CD8-positive, alpha-beta memory T cell (primary cell): ENCODE measurements at regions of chr3 and their contacts with region 1.

Region 1: GRCh38 chr3:136752422-136753325 is 496 bp upstream of the STAG1 start:
- DNase-seq: peak; percentile 97 to 99 (median 99)
- H3K4me3 ChIP-seq: peak overlapping the region; percentile 60
- H3K4me3 Mint-ChIP-seq: peak overlapping the region; percentile 78 to 99 (median 93)
- H3K27ac ChIP-seq: peak overlapping the region; percentile 86
- H3K27ac Mint-ChIP-seq: peak overlapping the region; percentile 93 to 100 (median 97)
- H3K4me1 ChIP-seq: peaks cover 33% of the 10 kb centered on the region
- H3K4me1 Mint-ChIP-seq: peaks cover 44 to 45% (median 45%) of the 10 kb centered on the region in 3 donors
- H3K27me3 ChIP-seq: no peaks in the 10 kb centered on the region
- H3K27me3 Mint-ChIP-seq: peaks cover 0 to 3% of the 10 kb centered on the region in 2 donors

Region 2: DNA sequence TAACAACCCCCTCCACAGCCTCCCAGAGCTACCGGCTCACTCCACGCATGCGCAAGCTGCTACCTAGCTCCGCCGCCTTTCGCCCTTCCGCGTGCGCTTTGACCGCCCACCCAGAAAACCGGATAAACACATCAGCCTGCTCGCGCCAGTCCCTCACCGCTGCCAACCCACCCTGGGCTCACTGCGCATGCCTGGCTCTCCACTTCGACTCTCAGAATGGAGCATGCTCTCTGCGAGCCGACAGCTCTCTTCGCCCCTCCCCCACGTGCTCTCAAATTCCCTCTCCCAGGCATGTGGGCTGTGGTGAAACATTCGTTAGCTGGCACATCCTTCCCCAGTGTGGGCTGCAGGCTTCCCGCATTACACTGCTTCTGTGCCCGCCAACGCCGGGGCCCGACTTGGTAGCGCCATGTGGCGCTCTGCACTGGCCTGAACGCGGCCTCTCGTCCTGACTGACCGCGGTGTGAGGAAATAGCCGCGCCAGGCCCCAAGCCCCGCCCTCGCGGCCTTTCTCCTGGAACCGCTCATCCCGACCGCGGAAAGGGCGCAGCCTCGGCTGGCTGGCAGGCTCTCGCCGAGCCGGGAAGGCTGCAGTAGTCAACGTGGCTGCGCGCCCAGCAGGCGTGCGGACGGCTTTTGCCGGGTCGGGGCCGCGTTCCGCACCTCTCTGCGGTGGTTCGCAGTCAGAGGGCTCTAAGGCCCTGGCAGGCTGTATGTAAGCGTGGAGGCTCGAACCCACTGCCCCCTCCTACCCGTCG is 556.1 kb before region 1 on chr3:
- CTCF ChIA-PET with region 1: interaction called, 44 read pairs
- POLR2A ChIA-PET with region 1: interaction called, 61 read pairs
- DNase-seq: peak; percentile 96 to 99 (median 97)
- H3K4me3 ChIP-seq: peak overlapping the region; percentile 89
- H3K4me3 Mint-ChIP-seq: peak overlapping the region; percentile 96 to 100 (median 98)
- H3K27ac ChIP-seq: peak overlapping the region; percentile 84
- H3K27ac Mint-ChIP-seq: peak overlapping the region; percentile 98 to 100 (median 99)
- H3K4me1 ChIP-seq: peaks cover 24% of the 10 kb centered on the region
- H3K4me1 Mint-ChIP-seq: peaks cover 32 to 39% (median 39%) of the 10 kb centered on the region in 3 donors
- H3K27me3 ChIP-seq: no peaks in the 10 kb centered on the region
- H3K27me3 Mint-ChIP-seq: peaks cover 0 to 15% of the 10 kb centered on the region in 2 donors

Region 3: DNA sequence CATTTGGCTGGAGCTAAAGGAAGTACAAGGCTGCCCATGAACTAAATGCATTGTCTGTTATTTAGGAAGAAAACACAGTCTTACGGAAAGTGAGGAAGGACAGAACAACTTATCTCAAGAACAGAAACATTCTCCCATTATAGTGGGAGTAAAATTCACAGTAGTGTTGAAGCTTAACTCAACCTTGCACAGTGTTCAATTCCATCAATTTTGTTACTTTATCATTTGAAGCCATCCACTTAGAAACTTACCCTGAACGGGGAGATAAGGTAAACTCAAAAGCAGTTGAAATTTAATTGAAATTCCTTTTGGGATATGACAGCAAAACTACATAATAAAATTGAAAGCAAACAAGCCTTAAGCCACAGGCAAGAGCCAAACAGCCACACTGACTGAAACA is 315.6 kb before region 1 on chr3:
- CTCF ChIA-PET with region 1: interaction called, 10 read pairs
- POLR2A ChIA-PET with region 1: no interaction called
- DNase-seq: no peak
- H3K4me3 ChIP-seq: no peak overlapping the region
- H3K4me3 Mint-ChIP-seq: no peak overlapping the region
- H3K27ac ChIP-seq: no peak overlapping the region
- H3K27ac Mint-ChIP-seq: no peak overlapping the region
- H3K4me1 ChIP-seq: no peaks in the 10 kb centered on the region
- H3K4me1 Mint-ChIP-seq: peaks cover 0 to 5% (median 0%) of the 10 kb centered on the region in 3 donors
- H3K27me3 ChIP-seq: no peaks in the 10 kb centered on the region
- H3K27me3 Mint-ChIP-seq: no peaks in the 10 kb centered on the region

Region 4: DNA sequence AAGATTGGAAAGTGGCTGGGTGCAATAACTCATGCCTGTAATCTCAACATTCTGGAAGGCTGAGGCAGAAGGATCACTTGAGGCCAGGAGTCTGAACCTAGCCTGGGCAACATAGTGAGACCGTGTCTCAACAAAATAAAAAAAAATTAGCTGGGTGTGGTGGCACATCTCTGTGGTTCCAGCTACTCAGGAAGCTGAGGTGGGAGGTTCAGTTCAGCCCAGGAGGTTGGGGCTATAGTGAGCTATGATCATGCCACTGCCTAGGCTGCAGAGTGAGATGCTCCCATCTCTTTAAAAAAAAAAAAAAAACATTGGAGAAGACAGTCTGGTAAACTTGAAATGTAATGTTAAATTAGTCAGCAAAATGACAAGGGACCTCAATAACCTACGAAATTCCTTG is 58.4 kb before region 1 on chr3:
- CTCF ChIA-PET with region 1: interaction called, 16 read pairs
- POLR2A ChIA-PET with region 1: interaction called, 11 read pairs
- DNase-seq: peak in 2 of 5 donors; percentile 2 to 33
- H3K4me3 ChIP-seq: no peak overlapping the region
- H3K4me3 Mint-ChIP-seq: peak overlapping the region in 6 of 7 donors; percentile 56 to 87 (median 66)
- H3K27ac ChIP-seq: no peak overlapping the region
- H3K27ac Mint-ChIP-seq: peak overlapping the region; percentile 42 to 90 (median 74)
- H3K4me1 ChIP-seq: peaks cover 38% of the 10 kb centered on the region
- H3K4me1 Mint-ChIP-seq: peaks cover 61 to 88% (median 87%) of the 10 kb centered on the region in 3 donors
- H3K27me3 ChIP-seq: no peaks in the 10 kb centered on the region
- H3K27me3 Mint-ChIP-seq: no peaks in the 10 kb centered on the region

Region 5: GRCh38 chr3:136734382-136735070 is 18.1 kb before region 1 on chr3:
- CTCF ChIA-PET with region 1: interaction called, 20 read pairs
- POLR2A ChIA-PET with region 1: interaction called, 4 read pairs
- DNase-seq: peak in 1 of 5 donors; percentile 24
- H3K4me3 ChIP-seq: no peak overlapping the region
- H3K4me3 Mint-ChIP-seq: peak overlapping the region in 1 of 7 donors; percentile 4
- H3K27ac ChIP-seq: no peak overlapping the region
- H3K27ac Mint-ChIP-seq: peak overlapping the region in 7 of 8 donors; percentile 5 to 91 (median 56)
- H3K4me1 ChIP-seq: peaks cover 37% of the 10 kb centered on the region
- H3K4me1 Mint-ChIP-seq: peaks cover 51 to 79% (median 69%) of the 10 kb centered on the region in 3 donors
- H3K27me3 ChIP-seq: no peaks in the 10 kb centered on the region
- H3K27me3 Mint-ChIP-seq: no peaks in the 10 kb centered on the region

Region 6: GRCh38 chr3:136885357-136886213 is 132.9 kb after region 1 on chr3:
- CTCF ChIA-PET with region 1: interaction called, 11 read pairs
- POLR2A ChIA-PET with region 1: interaction called, 3 read pairs
- DNase-seq: peak in 2 of 5 donors; percentile 17 to 37
- H3K4me3 ChIP-seq: peak overlapping the region; percentile 47
- H3K4me3 Mint-ChIP-seq: peak overlapping the region; percentile 35 to 78 (median 71)
- H3K27ac ChIP-seq: no peak overlapping the region
- H3K27ac Mint-ChIP-seq: peak overlapping the region; percentile 43 to 94 (median 78)
- H3K4me1 ChIP-seq: peaks cover 65% of the 10 kb centered on the region
- H3K4me1 Mint-ChIP-seq: peaks cover 77 to 90% (median 85%) of the 10 kb centered on the region in 3 donors
- H3K27me3 ChIP-seq: no peaks in the 10 kb centered on the region
- H3K27me3 Mint-ChIP-seq: peaks cover 0 to 1% of the 10 kb centered on the region in 2 donors